SK-N-SH (cell line): ENCODE measurements at regions of chr7 and their contacts with region 1.

Region 1: GRCh38 chr7:992709-993607 is 10.0 kb downstream of the CYP2W1 start:
- DNase-seq: peak; percentile 98
- H3K4me3 ChIP-seq: peak overlapping the region in 1 of 2 experiments; percentile 24; a peak in 1 of 4 replicates
- H3K27ac ChIP-seq: no peak overlapping the region
- H3K4me1 ChIP-seq: peaks cover 3 to 7% of the 10 kb centered on the region in 2 experiments; a peak in 2 of 4 replicates
- H3K27me3 ChIP-seq: no peaks in the 10 kb centered on the region
- CTCF ChIP-seq: peak; percentile 100
- EP300 ChIP-seq: 0 out of 4 replicates have a peak, but pooled peaks of 1 of the 2 experiments have one; percentile 17
- RAD21 ChIP-seq: peak; percentile 100

Region 2: DNA sequence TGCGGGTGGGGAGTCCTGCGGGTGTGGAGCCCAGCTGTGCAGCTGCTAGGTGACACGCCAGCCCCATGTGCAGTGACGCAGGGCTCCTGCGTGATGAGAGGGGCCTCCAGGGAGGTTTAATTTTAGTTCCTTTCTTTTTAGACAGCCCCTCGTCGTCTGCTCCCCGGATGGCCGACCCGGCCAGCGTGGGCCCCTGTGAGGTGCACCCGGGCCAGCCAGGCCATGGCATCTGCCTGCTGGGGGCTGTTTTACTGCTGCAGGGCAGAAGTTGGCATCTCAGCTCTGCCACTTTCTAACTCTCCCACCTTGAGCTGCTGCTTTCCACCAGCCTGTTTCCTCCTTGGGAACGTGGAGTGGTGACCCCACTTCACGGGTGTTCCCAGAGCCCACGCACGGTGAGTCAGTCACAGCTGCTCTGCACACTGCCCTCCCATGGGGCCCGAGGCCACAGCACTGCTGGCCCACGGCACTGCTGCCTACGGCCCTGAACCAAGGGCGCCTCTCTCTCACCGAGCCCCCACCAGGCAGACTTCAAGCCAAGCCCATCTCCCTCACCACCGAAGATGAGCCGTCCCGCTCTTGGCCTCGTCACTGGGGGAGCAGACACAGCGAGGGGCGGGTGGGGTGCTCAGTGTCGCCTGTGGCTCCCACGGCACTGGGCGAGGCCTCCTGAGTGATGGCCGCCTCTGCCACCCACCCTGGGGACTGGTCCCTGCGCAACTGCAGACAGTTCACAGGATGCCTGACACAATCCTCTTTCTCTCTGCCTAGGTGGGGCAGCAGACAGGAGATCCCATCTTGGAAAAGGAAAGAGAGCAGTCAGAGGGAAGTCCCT is 11.3 kb after region 1 on chr7:
- CTCF ChIA-PET with region 1: interaction called, 42 read pairs
- POLR2A ChIA-PET with region 1: no interaction called
- DNase-seq: no peak
- H3K4me3 ChIP-seq: no peak overlapping the region
- H3K27ac ChIP-seq: no peak overlapping the region
- H3K4me1 ChIP-seq: no peaks in the 10 kb centered on the region; a peak in 1 of 4 replicates
- H3K27me3 ChIP-seq: no peaks in the 10 kb centered on the region
- CTCF ChIP-seq: no peak
- EP300 ChIP-seq: no peak
- RAD21 ChIP-seq: no peak

Region 3: DNA sequence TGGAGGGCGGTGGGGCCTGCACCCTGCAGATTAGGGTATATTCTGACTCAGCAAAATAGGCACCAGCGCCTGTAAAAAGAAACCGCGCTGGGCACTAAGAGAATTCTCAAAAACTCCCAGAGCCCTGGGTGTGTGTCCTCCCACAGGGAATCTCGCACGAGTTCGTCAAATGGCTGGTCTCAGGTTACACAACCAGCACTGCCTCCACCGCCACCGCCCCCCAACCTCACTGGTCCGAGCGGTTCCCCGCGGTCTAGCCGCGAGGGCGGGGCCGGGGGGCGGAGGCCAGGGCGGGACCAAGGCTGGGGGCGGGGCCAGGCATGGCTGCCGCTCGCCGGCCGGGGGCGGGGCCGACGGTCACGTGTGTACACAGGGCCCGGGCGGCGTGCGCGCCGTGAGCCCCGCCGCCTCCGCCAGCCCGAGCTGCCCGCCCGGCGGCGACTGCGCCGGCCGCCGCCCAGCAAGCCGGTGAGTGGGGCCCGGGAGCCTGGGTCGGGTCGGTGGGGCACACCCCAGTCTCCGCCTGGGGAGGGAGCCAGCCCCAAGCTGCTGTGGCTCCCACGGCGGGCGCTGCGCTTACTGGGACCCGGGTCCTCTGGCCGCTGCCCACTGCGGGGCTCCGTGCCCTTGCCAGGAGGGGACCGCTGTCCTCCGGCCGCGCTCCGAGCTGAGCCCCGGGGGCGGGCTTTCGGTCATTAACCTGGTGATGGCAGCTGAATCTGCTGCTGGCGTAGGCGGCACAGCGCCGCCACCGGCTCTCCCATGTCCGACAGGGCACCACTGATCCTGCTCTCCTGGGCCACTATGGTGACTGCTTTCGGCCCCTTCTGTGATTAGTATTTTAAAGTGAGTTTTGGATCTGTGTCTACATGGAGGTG is 51.5 kb after region 1 on chr7 and contains the start of gene GPR146:
- CTCF ChIA-PET with region 1: interaction called, 756 read pairs
- POLR2A ChIA-PET with region 1: no interaction called
- DNase-seq: peak; percentile 100
- H3K4me3 ChIP-seq: peak within 1 kb of the TSS; percentile 78 to 79
- H3K27ac ChIP-seq: peak within 1 kb of the TSS; percentile 66 to 81
- H3K4me1 ChIP-seq: peaks cover 16 to 74% of the 10 kb centered on the region in 2 experiments
- H3K27me3 ChIP-seq: no peaks in the 10 kb centered on the region
- CTCF ChIP-seq: peak; percentile 84
- EP300 ChIP-seq: no peak
- RAD21 ChIP-seq: peak; percentile 48
- polyA plus RNA-seq, gene GPR146: 1.4 and 2.0 TPM in 2 replicates

Region 4: GRCh38 chr7:1103009-1103788 is 110.2 kb after region 1 on chr7:
- CTCF ChIA-PET with region 1: interaction called, 53 read pairs
- POLR2A ChIA-PET with region 1: no interaction called
- DNase-seq: no peak
- H3K4me3 ChIP-seq: no peak overlapping the region
- H3K27ac ChIP-seq: no peak overlapping the region
- H3K4me1 ChIP-seq: peaks cover 6 to 22% of the 10 kb centered on the region in 2 experiments; a peak in 2 of 4 replicates
- H3K27me3 ChIP-seq: no peaks in the 10 kb centered on the region
- CTCF ChIP-seq: no peak
- EP300 ChIP-seq: no peak
- RAD21 ChIP-seq: no peak

Region 5: DNA sequence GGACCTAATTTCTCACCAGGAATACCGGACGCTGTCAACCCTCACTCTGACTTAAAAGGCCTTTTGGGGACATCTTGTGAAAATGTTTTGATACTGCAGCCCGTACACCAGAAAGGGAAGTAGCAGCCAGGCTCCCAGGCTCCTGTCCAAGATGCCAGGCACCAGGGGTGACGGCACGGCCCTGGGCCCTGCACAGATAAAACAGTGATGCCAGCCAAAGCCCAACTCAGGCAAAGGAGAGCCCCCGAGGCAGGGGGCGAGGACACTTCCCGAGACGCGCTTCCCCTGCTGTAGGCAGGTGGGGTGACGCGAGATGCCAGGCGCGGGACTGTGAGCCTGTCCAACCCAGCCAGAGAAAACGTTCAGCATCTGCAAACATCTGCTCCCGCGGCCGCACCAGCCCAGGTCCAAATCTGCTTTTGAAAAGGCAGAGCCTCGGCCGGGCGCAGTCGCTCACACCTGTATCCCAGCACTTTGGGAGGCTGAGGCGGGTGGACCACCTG is 151.4 kb after region 1 on chr7:
- CTCF ChIA-PET with region 1: interaction called, 327 read pairs
- POLR2A ChIA-PET with region 1: interaction called, 8 read pairs
- DNase-seq: peak; percentile 92
- H3K4me3 ChIP-seq: peak overlapping the region in 1 of 2 experiments; percentile 20; a peak in 3 of 4 replicates
- H3K27ac ChIP-seq: peak overlapping the region in 1 of 2 experiments; percentile 41; a peak in 2 of 4 replicates
- H3K4me1 ChIP-seq: peaks cover 0 to 22% of the 10 kb centered on the region in 2 experiments; a peak in 2 of 4 replicates
- H3K27me3 ChIP-seq: no peaks in the 10 kb centered on the region
- CTCF ChIP-seq: peak; percentile 70
- EP300 ChIP-seq: no peak; a peak in 1 of 4 replicates
- RAD21 ChIP-seq: peak; percentile 99

Region 6: GRCh38 chr7:1181640-1182039 is 188.7 kb after region 1 on chr7:
- CTCF ChIA-PET with region 1: interaction called, 64 read pairs
- POLR2A ChIA-PET with region 1: no interaction called
- DNase-seq: no peak
- H3K4me3 ChIP-seq: no peak overlapping the region
- H3K27ac ChIP-seq: no peak overlapping the region
- H3K4me1 ChIP-seq: no peaks in the 10 kb centered on the region; a peak in 1 of 4 replicates
- H3K27me3 ChIP-seq: peaks cover 25% of the 10 kb centered on the region
- CTCF ChIP-seq: no peak
- EP300 ChIP-seq: no peak
- RAD21 ChIP-seq: no peak